ENCODE measurements at regions of chr19 and their contacts with region 1.

Region 1: DNA sequence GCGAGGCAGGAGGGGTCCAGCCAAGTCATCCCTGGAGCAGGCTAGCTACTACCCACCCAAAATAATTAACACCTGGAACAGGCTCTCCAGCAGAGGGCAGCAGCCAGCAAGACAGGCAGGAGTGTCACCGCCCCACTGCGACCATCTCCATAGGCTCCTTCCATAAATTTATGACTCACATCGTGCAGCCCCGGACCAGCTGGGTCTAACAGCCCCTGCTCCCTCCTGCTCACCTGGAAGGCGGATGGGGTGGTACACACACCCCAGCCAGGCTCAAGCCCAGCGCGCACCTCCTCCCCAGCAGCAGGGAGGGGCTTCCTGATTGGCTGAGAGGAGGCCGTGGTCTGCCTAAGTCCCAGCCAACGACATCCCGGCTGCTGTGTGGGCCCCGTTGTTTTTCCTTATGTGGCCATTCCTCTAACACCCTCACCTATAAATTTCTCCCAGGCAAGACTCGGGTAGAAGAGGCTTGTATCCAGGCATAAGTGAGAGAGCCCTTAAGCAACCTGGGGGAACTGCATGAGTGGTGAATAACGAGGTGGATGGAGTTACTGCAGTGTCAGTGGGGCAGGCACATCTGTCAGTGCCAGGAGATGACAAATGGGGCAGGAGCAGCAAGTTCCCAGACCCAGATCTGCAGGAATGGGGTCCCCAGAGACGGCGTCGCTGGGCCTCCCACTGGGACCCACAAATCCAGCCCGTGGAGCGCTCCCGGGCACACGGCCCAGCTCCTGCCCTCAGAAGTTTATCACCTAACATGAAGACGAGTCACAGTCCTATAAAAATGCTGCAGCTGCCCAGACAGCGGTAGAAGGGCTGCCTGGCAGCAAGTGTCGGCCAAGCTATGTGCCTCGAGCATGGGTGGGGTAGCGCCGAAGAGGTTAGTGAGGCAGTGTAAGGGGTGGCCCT is 43.1 kb downstream of the CEBPG start:
- DNase-seq: no peak
- H3K4me3 ChIP-seq: no peak overlapping the region
- H3K27me3 ChIP-seq: no peaks in the 10 kb centered on the region
- CTCF ChIP-seq: peak; percentile 76

Region 2: DNA sequence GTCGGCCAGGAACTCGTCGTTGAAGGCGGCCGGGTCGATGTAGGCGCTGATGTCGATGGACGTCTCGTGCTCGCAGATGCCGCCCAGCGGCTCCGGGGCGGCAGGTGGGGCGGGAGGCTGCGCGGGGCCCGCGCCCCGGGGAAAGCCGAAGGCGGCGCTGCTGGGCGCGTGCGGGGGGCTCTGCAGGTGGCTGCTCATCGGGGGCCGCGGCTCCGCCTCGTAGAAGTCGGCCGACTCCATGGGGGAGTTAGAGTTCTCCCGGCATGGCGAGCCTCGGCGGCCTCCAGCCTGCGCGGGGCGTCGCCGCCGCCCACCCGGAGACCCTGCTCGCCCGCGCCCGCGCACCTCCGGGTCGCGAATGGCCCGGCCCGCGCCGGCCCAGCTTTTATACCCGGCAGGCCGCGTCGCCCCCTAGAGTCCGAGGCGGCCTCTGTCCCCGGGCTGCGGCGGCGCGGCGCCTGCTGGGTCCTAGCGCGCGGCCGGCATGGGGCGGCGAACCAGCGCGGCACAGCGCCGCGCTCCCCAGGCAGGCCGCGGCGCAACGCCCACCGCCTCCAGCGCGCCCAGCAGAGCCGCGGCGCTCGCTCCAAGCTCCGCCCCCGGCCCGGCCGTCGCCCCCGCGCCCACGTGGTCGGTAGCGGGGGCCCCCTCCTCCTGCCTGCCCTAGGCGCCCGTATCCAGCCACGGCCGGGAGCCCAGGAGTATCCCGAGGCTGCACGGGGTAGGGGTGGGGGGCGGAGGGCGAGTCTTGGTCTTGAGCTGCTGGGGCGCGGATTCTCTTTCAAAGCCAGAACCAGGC is 114.2 kb before region 1 on chr19 and contains the start of gene CEBPA:
- CTCF ChIA-PET with region 1: interaction called, 10 read pairs
- POLR2A ChIA-PET with region 1: no interaction called
- DNase-seq: no peak
- H3K4me3 ChIP-seq: peak within 1 kb of the TSS; percentile 62
- H3K27me3 ChIP-seq: peaks cover 27% of the 10 kb centered on the region
- CTCF ChIP-seq: peak; percentile 34; the same call in 1 of the 2 replicates
- polyA plus RNA-seq, gene CEBPA: 0.28 and 0.50 TPM in 2 replicates

Region 3: DNA sequence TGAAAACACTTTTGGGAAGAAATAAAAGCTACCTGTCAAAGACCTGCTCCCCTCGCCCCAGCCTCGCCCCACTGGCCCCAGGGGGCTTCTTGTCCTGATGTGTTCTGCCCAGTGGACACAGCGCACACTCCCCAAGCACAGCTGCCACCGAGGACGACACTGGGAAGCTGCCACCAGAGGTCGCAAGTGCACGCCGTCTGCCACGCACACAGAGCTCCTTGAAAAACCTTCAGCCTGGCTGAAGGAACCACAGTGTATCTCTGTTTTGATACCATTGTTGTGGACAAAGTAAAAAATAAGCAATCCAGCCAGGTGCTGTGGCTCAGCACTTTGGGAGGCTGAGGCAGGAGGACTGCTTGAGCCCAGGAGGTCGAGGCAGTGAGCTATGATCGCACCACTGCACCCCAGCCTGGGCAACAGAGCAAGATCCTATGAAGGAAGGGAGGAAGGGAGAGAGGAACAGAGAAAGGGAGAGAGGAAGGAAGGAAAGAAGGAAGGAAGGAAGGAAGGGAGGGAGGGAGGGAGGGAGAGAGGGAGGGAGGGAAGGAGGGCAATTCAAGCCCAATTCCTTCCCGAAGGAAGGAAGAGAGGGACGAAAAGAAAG is 14.2 kb after region 1 on chr19:
- CTCF ChIA-PET with region 1: interaction called, 23 read pairs
- POLR2A ChIA-PET with region 1: no interaction called
- DNase-seq: no peak
- H3K4me3 ChIP-seq: no peak overlapping the region
- H3K27me3 ChIP-seq: no peaks in the 10 kb centered on the region
- CTCF ChIP-seq: peak; percentile 92

Region 4: DNA sequence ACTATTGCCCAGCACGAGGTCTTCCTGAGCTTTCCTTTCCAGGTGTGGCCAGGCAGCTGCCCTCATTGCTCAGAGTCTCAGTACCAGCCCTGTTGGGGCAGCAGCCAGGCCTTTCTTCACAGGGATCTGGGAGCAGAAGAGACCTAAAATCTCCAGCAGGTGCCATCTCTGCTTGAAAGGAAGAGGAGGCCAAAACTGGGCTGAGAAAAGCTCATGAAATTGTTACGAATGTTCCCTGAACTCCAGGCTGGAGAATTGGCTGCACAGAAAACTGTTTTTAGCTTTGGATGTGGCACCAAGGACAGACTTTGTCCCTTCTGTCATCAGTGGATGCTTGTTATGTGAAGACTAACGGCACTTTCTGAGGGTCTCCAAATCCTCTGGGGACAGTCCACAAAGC is 113.7 kb after region 1 on chr19:
- CTCF ChIA-PET with region 1: no interaction called
- POLR2A ChIA-PET with region 1: no interaction called
- DNase-seq: no peak
- H3K4me3 ChIP-seq: no peak overlapping the region
- H3K27me3 ChIP-seq: peaks cover 8% of the 10 kb centered on the region
- CTCF ChIP-seq: no peak

Measured in BJ (cell line).